ENCODE measurements at regions of chr1 and their contacts with region 1.

Region 1: GRCh38 chr1:43934101-43934985 is 742 bp downstream of the ARTN start:
- DNase-seq: peak; percentile 90
- H3K4me3 Mint-ChIP-seq: peak overlapping the region; percentile 66
- H3K27ac Mint-ChIP-seq: peak overlapping the region; percentile 48
- H3K4me1 Mint-ChIP-seq: peaks cover 6% of the 10 kb centered on the region
- H3K27me3 Mint-ChIP-seq: peaks cover 3% of the 10 kb centered on the region
- CTCF ChIP-seq: peak; percentile 83

Region 2: GRCh38 chr1:43763497-43763973 is 170.8 kb before region 1 on chr1:
- CTCF ChIA-PET with region 1: interaction called, 193 read pairs
- intact Hi-C with region 1: loop called (anchors 1 kb)
- DNase-seq: peak; percentile 74
- H3K4me3 Mint-ChIP-seq: no peak overlapping the region
- H3K27ac Mint-ChIP-seq: no peak overlapping the region
- H3K4me1 Mint-ChIP-seq: no peaks in the 10 kb centered on the region
- H3K27me3 Mint-ChIP-seq: no peaks in the 10 kb centered on the region
- CTCF ChIP-seq: peak; percentile 77

Region 3: DNA sequence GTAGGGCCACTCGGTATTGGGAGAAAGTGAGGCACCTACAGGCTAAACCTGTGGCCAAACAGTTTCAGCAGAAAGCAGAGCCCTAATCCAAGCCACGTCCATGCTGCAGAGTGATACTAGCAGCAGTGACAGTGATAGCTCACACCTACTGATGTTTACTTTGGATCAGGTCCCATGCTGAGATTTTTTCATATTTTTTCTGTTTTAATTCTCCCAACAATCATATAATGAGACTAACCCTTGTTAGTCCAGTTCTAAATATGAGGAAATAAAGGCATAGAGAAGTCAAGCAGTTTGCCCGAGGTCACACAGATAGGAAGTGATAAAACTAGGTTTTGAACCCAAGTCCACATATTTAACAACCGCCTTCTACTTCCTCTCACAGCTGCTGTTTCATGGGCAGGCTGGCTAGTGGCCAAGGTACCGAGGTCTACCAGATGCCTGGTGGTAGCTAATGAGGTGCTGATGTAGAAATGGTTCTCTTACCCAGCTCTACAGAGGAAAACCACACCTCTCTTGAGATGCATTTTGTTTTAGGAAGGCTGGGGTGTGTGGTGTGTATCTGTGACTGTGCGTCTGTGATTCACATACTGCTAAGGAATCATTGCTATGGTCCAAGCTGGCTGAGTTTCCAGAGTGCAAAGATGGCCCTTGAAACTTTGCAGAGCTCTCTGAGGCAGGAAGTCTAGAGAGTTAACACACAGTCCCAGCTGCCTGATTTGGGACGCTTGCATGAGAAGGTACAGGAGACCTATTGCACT is 81.0 kb before region 1 on chr1:
- CTCF ChIA-PET with region 1: interaction called, 8 read pairs
- intact Hi-C with region 1: loop called (anchors 5 kb)
- DNase-seq: peak; percentile 70
- H3K4me3 Mint-ChIP-seq: no peak overlapping the region
- H3K27ac Mint-ChIP-seq: no peak overlapping the region
- H3K4me1 Mint-ChIP-seq: peaks cover 46% of the 10 kb centered on the region
- H3K27me3 Mint-ChIP-seq: no peaks in the 10 kb centered on the region
- CTCF ChIP-seq: no peak

Region 4: GRCh38 chr1:43946236-43947060 is 12.1 kb after region 1 on chr1 and contains the start of gene IPO13:
- CTCF ChIA-PET with region 1: interaction called, 14 read pairs
- intact Hi-C with region 1: no loop called
- DNase-seq: peak; percentile 97
- H3K4me3 Mint-ChIP-seq: peak within 1 kb of the TSS; percentile 98
- H3K27ac Mint-ChIP-seq: peak within 1 kb of the TSS; percentile 86
- H3K4me1 Mint-ChIP-seq: peaks cover 17% of the 10 kb centered on the region
- H3K27me3 Mint-ChIP-seq: no peaks in the 10 kb centered on the region
- CTCF ChIP-seq: peak; percentile 67
- total RNA-seq, gene IPO13: 24.2 and 28.5 TPM in 2 replicates

Measured in Calu3 (cell line).